Activated T-helper 1 cell treated with anti-CD3 and anti-CD28 coated beads, Interleukin-12 subunit alpha, Interleukin-12 subunit beta, Interleukin-2, Interleukin-4 antibody, amounts not matched to agents 30 ng/mL and 10 ng/mL and 1 ng/mL, durations not matched to agents 14 hours and 24 hours and 36 hours (primary cell): ENCODE measurements at regions of chr7 and their contacts with region 1.

Region 1: DNA sequence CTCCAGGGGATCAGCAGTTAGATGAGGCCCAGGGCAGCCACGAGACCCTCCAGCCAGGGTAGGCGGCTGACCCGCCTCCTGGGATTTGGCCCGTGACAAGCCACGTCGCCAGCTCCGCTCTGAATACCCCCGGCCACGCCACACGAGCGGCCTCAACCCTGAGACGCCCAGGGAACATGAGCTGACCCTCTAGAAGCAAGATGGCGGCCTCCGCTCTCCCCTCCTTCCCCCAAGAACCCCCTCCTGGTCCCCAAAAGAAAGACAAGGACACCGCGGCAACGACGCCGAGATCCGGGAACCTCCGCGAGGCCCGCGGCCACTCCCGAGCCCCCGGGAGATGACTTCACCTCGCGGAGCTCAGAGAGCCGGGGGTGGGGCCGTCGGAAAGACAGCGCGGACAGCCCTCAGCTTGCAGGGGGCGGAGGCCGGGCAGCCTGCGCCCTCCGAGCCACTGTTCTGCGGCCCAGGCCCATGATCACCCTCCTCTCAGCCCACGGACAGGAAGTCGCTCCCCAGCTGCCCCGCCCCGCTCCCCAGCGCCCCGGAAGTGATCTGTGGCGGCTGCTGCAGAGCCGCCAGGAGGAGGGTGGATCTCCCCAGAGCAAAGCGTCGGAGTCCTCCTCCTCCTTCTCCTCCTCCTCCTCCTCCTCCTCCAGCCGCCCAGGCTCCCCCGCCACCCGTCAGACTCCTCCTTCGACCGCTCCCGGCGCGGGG is at the start of gene RALA:
- DNase-seq: peak; percentile 87
- H3K4me3 Mint-ChIP-seq: peak within 1 kb of the TSS; percentile 95
- H3K27ac Mint-ChIP-seq: peak within 1 kb of the TSS; percentile 97
- H3K4me1 Mint-ChIP-seq: peaks cover 52% of the 10 kb centered on the region
- H3K27me3 Mint-ChIP-seq: peaks cover 7% of the 10 kb centered on the region
- total RNA-seq, gene RALA: 38.8 and 43.4 TPM in 2 replicates

Region 2: GRCh38 chr7:38908759-38909335 is 714.3 kb before region 1 on chr7 and contains the start of gene VPS41:
- intact Hi-C with region 1: loop called (anchors 1 kb)
- DNase-seq: peak; percentile 72
- H3K4me3 Mint-ChIP-seq: peak within 1 kb of the TSS; percentile 97
- H3K27ac Mint-ChIP-seq: peak within 1 kb of the TSS; percentile 93
- H3K4me1 Mint-ChIP-seq: peaks cover 38% of the 10 kb centered on the region
- H3K27me3 Mint-ChIP-seq: peaks cover 2% of the 10 kb centered on the region
- total RNA-seq, gene VPS41: 52.9 and 56.3 TPM in 2 replicates

Region 3: GRCh38 chr7:39468808-39469374 is 154.3 kb before region 1 on chr7:
- intact Hi-C with region 1: no loop called
- DNase-seq: no peak
- H3K4me3 Mint-ChIP-seq: no peak overlapping the region
- H3K27ac Mint-ChIP-seq: no peak overlapping the region
- H3K4me1 Mint-ChIP-seq: peaks cover 18% of the 10 kb centered on the region
- H3K27me3 Mint-ChIP-seq: peaks cover 10% of the 10 kb centered on the region

Region 4: DNA sequence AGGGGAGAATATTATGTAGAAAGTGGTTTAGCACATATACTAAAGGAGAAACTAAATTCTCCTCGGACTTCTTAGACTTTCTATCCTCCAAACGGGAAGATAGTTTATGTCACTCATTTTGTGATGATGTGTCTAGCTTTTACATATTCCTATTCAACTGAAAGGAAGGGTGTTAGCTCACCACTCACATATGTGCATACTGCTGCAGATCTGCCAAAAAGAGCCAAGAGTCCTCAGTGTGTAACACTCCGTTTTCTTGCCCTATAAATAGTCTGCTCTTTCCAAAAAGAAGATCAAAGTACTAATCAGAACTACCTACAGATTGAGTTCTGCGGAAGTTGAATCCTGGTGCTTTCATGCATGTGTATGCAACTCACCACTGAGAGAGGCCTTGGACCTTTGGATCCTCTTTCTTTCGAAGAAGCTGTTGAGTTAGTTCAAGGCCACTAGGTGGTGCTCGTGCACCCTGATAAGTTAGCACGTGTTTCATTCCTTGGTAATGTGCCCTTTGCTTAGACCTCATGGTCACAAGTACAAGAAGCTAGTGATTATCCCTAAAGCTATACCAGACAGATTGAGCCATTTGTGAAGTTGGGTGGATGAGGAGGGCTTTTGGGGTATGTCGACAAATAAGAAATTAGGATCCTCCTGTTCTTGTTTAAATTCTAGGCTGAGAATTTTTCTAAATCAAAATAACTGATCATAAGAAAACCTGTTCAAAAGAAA is 42.9 kb before region 1 on chr7:
- intact Hi-C with region 1: loop called (anchors 1 kb)
- DNase-seq: peak; percentile 63
- H3K4me3 Mint-ChIP-seq: no peak overlapping the region
- H3K27ac Mint-ChIP-seq: peak overlapping the region; percentile 64
- H3K4me1 Mint-ChIP-seq: peaks cover 10% of the 10 kb centered on the region
- H3K27me3 Mint-ChIP-seq: no peaks in the 10 kb centered on the region

Region 5: GRCh38 chr7:39589323-39590111 is 33.7 kb before region 1 on chr7:
- intact Hi-C with region 1: loop called (anchors 1 kb)
- DNase-seq: peak; percentile 77
- H3K4me3 Mint-ChIP-seq: peak overlapping the region; percentile 63
- H3K27ac Mint-ChIP-seq: peak overlapping the region; percentile 80
- H3K4me1 Mint-ChIP-seq: peaks cover 69% of the 10 kb centered on the region
- H3K27me3 Mint-ChIP-seq: no peaks in the 10 kb centered on the region

Region 6: DNA sequence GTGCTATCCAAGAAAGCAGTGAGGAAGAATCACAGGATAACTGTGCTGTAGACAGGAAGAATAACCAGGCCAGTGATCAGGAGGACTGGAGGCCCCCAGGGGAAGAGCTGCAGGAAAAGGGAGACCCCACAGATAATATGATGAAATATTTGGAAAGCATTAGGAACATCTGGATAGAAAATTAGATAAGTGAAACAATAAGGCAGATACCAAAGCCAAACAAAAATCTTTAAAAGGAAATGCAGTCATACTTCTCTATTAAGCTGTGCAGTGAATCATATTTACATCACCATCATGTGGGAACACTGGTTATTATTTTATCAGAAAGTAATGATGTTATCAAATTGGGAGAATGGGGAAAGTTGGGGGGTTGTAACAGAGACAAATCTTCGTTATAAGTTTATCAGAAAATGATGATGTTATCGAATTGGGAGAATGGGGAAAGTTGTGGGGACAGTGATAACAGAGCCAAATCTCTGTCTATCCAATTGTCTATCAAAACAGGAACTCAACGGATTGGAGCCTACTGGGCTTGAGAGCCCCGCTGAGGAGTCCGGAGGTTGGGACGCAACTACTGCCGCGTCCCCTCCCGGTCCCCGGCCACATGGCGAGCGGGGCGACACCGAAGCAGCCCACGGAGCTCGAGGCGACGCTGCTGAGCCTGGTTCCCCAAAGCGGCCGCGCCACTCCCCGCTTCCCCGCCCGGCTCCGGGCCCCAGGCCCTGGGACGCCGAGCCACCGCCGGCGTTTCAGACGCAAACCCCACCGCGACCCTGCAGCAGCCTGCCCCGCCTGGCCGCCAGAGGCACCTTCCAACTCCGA is 13.9 kb before region 1 on chr7:
- intact Hi-C with region 1: loop called (anchors 2 kb)
- DNase-seq: no peak
- H3K4me3 Mint-ChIP-seq: peak overlapping the region; percentile 25
- H3K27ac Mint-ChIP-seq: peak overlapping the region; percentile 27
- H3K4me1 Mint-ChIP-seq: peaks cover 54% of the 10 kb centered on the region
- H3K27me3 Mint-ChIP-seq: peaks cover 13% of the 10 kb centered on the region

Region 7: DNA sequence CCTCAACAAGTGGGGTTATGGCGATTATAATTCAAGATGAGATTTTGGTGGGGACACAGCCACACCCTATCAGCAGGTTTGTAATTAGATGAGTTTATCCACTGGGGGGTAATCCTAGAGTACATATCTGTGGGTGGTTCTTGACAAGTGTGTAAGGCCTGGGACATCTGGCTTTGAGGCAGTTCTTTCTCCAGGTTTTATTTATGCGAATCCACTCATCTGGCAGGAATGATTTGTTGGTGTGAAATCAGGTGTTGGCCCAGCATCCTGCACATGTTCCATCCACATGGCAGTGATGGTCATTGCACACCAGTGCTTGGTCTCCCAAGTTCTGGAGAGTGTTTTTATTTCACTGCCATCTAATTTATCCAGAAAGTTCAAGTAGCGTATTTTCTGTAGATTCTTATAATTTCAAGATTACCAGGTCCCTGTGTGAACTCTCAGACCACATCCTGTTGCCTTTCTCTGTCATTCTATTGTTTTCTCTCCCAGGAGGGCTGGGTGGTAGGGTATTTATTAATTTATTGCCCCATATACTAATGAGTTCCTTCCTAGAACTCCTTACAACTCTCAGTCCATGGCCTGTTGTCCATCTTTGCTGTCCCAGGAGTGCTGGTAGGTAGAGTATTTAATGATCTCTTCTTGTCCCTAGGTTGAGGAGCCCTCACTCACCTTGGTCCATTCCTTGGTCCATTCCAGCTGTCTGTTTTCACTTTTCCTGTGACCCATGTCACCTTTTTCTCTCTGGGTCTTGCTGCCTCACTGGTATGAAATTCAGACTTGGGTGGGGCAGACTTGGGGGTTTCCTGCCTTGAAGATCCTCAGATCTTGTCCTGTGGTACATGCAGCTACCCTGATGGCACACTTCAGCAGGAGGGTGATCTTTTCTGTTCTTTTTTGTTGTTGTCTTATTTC is 10.6 kb after region 1 on chr7:
- intact Hi-C with region 1: loop called (anchors 1 kb)
- DNase-seq: no peak
- H3K4me3 Mint-ChIP-seq: peak overlapping the region; percentile 23
- H3K27ac Mint-ChIP-seq: peak overlapping the region; percentile 49
- H3K4me1 Mint-ChIP-seq: peaks cover 64% of the 10 kb centered on the region
- H3K27me3 Mint-ChIP-seq: no peaks in the 10 kb centered on the region

Region 8: DNA sequence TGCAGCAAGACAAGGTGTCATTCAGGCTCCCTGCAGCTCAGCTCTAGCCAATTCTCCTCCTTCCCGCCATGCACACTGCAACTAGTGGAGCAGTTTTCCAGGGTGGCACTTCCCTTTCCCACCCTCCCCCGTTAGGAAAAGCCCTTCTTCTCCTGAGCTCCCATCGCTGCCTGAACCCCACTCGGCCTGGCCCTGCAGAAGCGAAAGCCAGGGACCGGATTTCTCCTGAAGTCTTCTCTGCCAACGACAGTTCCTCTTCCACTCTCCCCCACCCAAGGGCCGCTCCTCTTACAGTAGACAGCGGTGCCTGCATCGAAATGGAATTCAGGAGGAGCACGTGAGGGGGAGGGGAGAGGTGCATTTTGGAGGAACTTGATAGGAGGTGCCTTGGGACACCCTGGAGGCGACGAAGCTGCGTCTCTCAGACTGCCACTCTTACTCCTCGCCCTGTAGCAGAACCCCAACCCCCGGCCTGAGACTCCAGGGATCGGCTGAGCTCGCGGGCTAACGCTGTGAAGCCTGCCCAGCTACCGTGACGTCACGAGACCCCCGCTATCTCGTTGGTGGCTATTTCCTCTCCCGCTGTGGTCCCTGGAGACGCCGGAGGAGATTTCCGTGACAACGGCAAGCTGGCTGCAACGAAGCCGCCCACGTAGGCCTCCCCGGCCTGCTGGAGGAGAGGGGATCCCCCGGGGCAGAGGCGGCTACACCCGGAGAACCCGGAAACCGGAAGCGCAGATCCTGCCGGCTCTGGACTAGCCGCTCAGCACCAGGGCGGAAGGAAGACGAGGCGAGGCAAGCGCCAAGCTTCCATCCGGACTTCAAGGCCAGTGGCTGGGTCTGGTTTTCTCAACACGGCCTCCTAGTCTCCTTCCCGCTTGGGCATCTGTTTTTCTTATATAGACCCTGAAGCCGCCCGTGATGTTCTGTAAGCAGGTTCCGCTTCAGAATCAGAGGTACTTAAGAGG is 109.9 kb after region 1 on chr7:
- intact Hi-C with region 1: loop called (anchors 1 kb)
- DNase-seq: peak; percentile 97
- H3K4me3 Mint-ChIP-seq: peak overlapping the region; percentile 86
- H3K27ac Mint-ChIP-seq: peak overlapping the region; percentile 95
- H3K4me1 Mint-ChIP-seq: peaks cover 46% of the 10 kb centered on the region
- H3K27me3 Mint-ChIP-seq: peaks cover 6% of the 10 kb centered on the region